ENCODE measurements at regions of chr11 and their contacts with region 1.

Region 1: GRCh38 chr11:118338637-118339061 is 3.9 kb downstream of the CD3D start:
- DNase-seq: peak; percentile 87 to 98 (median 90)
- H3K4me3 ChIP-seq: peak overlapping the region; percentile 89 to 97
- H3K4me3 Mint-ChIP-seq: peak overlapping the region; percentile 91 to 100 (median 97)
- H3K27ac ChIP-seq: peak overlapping the region; percentile 93
- H3K27ac Mint-ChIP-seq: peak overlapping the region; percentile 98 to 100 (median 99)
- H3K4me1 ChIP-seq: peaks cover 75% of the 10 kb centered on the region
- H3K4me1 Mint-ChIP-seq: peaks cover 32 to 79% (median 55%) of the 10 kb centered on the region in 4 donors
- H3K27me3 ChIP-seq: no peaks in the 10 kb centered on the region
- H3K27me3 Mint-ChIP-seq: peaks cover 0 to 1% of the 10 kb centered on the region in 2 donors

Region 2: GRCh38 chr11:118353084-118353710 is 14.5 kb after region 1 on chr11:
- CTCF ChIA-PET with region 1: interaction called, 14 read pairs
- POLR2A ChIA-PET with region 1: interaction called, 12 read pairs
- intact Hi-C with region 1: no loop called
- DNase-seq: peak in 4 of 5 donors; percentile 53 to 64 (median 63)
- H3K4me3 ChIP-seq: no peak overlapping the region
- H3K4me3 Mint-ChIP-seq: no peak overlapping the region
- H3K27ac ChIP-seq: peak overlapping the region; percentile 44
- H3K27ac Mint-ChIP-seq: peak overlapping the region; percentile 86 to 96 (median 93)
- H3K4me1 ChIP-seq: peaks cover 22% of the 10 kb centered on the region
- H3K4me1 Mint-ChIP-seq: peaks cover 22 to 29% (median 24%) of the 10 kb centered on the region in 4 donors
- H3K27me3 ChIP-seq: no peaks in the 10 kb centered on the region
- H3K27me3 Mint-ChIP-seq: no peaks in the 10 kb centered on the region